Dendritic cell treated with granulocyte-macrophage colony-stimulating factor and Interleukin-4, amounts not matched to agents 40 ng/mL and 50 ng/mL, for 4 days (primary cell): ENCODE measurements at regions of chr20 and their contacts with region 1.

Region 1: DNA sequence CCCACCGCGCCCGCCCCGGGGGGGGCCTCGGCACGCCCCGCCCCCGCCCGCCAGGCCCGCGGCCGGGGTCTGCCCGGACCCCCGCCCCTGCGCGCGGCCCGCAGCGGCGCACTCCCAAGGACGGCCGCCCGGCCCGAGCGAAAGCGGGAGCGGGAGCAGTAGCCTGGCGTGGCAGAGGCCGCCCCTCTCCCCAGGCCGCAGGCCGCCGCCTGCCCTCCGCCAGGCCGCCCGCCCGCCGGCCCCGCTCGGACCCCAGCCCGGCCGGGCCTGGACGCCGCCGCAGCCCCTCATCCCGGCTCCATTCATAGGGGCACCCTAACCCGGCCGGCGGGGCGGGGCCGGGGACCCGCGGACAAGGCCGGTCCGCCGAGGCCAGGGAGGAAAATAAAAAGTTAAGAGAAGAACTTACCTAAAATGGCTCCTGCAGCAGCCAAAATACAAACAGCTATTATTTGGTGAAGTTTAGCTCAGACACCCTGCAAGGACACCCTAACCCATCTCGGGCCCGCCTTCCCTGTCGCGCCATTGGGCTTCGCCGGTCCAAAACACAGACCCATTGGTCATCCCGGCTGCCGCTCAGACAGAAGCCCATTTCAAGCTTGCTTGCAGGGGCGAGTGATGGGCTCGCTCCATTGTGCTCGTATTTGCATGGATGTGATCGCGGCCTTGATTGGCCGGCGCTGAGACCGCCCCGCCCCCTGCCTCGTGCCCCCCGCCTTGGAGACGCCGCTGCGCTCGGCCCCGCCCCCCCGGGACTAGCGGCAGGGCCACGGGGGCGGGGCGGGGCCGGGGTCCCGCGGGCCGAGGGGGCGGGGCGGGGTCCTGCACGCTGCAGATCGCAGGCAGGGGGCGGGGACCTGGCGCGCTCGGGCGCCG is at the start of gene CHD6:
- H3K4me3 Mint-ChIP-seq: peak within 1 kb of the TSS; percentile 89
- H3K27ac Mint-ChIP-seq: peak within 1 kb of the TSS; percentile 88
- H3K4me1 Mint-ChIP-seq: peaks cover 33% of the 10 kb centered on the region
- H3K27me3 Mint-ChIP-seq: peaks cover 9% of the 10 kb centered on the region

Region 2: GRCh38 chr20:41509316-41510200 is 108.6 kb before region 1 on chr20:
- intact Hi-C with region 1: loop called (anchors 10 kb)
- H3K4me3 Mint-ChIP-seq: no peak overlapping the region
- H3K27ac Mint-ChIP-seq: no peak overlapping the region
- H3K4me1 Mint-ChIP-seq: peaks cover 29% of the 10 kb centered on the region
- H3K27me3 Mint-ChIP-seq: no peaks in the 10 kb centered on the region

Region 3: GRCh38 chr20:41631826-41632225 is 13.7 kb after region 1 on chr20:
- intact Hi-C with region 1: loop called (anchors 2 kb)
- H3K4me3 Mint-ChIP-seq: no peak overlapping the region
- H3K27ac Mint-ChIP-seq: no peak overlapping the region
- H3K4me1 Mint-ChIP-seq: peaks cover 18% of the 10 kb centered on the region
- H3K27me3 Mint-ChIP-seq: no peaks in the 10 kb centered on the region

Region 4: GRCh38 chr20:41693136-41693979 is 75.2 kb after region 1 on chr20:
- intact Hi-C with region 1: loop called (anchors 5 kb)
- H3K4me3 Mint-ChIP-seq: peak overlapping the region; percentile 82
- H3K27ac Mint-ChIP-seq: peak overlapping the region; percentile 92
- H3K4me1 Mint-ChIP-seq: peaks cover 33% of the 10 kb centered on the region
- H3K27me3 Mint-ChIP-seq: peaks cover 17% of the 10 kb centered on the region

Region 5: DNA sequence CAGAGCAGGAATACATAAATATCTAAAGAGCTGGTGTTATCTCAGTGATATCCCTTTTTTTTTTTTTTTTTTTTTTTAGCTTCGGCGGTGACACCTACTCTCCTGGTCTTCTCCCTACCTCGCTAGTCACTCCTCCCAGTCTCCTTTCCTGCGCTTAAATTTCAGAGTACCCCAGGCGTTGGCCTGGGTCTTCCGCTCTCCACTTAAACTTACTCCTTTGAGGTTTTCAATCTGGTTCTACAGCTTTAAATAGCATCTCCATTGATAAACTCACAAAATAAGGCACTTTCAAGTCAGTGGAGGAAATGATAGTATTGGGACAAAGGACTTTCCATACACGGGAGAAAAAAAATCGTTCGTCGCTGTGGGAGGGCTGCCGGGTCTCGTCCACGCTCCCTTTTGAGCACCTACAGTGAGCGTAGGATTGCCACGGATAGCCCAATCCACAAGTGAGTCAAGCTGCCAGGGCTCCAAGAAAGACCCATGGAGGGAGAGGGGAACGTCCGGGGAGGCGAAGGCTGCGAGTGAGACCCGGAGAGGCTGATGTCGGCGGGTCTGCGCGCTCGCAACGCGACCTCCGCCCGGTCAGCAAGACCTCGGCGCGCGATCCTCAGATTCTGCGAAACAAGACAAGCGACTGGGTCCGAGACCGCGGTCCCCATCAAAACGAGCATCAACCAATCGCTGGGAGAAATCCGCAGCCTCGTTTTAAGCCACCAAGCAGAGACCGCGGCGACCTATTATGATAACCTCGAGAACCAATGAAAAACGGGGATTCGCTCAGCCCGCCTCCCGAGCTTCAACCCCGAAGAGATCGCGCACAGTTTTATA is 1838.9 kb after region 1 on chr20:
- intact Hi-C with region 1: loop called (anchors 10 kb)
- H3K4me3 Mint-ChIP-seq: peak overlapping the region; percentile 94
- H3K27ac Mint-ChIP-seq: peak overlapping the region; percentile 99
- H3K4me1 Mint-ChIP-seq: peaks cover 19% of the 10 kb centered on the region
- H3K27me3 Mint-ChIP-seq: peaks cover 18% of the 10 kb centered on the region